Left lung (tissue), 14 donors: ENCODE measurements at regions of chr2 and their contacts with region 1.

Region 1: GRCh38 chr2:170973492-170974303 is 44.6 kb downstream of the GORASP2 start:
- DNase-seq: peak; percentile 82 to 96 (median 90)
- ATAC-seq: peak; percentile 99
- H3K4me3 ChIP-seq: peak overlapping the region; percentile 55 to 78
- H3K27ac ChIP-seq: peak overlapping the region; percentile 65 to 72
- H3K4me1 ChIP-seq: peaks cover 0 to 17% of the 10 kb centered on the region in 2 donors
- H3K27me3 ChIP-seq: peaks cover 0 to 23% of the 10 kb centered on the region in 2 donors
- CTCF ChIP-seq: peak; percentile 92 to 98

Region 2: GRCh38 chr2:171159372-171160118 is 185.8 kb after region 1 on chr2:
- intact Hi-C with region 1: loop called in 1 of 2 experiments (anchors 10 kb)
- DNase-seq: peak; percentile 50 to 81 (median 62)
- ATAC-seq: peak; percentile 55
- H3K4me3 ChIP-seq: peak overlapping the region; percentile 68 to 75
- H3K27ac ChIP-seq: peak overlapping the region; percentile 92 to 96
- H3K4me1 ChIP-seq: peaks cover 11 to 25% of the 10 kb centered on the region in 2 donors
- H3K27me3 ChIP-seq: no peaks in the 10 kb centered on the region
- CTCF ChIP-seq: peak in 1 of 2 donors; percentile 39

Region 3: DNA sequence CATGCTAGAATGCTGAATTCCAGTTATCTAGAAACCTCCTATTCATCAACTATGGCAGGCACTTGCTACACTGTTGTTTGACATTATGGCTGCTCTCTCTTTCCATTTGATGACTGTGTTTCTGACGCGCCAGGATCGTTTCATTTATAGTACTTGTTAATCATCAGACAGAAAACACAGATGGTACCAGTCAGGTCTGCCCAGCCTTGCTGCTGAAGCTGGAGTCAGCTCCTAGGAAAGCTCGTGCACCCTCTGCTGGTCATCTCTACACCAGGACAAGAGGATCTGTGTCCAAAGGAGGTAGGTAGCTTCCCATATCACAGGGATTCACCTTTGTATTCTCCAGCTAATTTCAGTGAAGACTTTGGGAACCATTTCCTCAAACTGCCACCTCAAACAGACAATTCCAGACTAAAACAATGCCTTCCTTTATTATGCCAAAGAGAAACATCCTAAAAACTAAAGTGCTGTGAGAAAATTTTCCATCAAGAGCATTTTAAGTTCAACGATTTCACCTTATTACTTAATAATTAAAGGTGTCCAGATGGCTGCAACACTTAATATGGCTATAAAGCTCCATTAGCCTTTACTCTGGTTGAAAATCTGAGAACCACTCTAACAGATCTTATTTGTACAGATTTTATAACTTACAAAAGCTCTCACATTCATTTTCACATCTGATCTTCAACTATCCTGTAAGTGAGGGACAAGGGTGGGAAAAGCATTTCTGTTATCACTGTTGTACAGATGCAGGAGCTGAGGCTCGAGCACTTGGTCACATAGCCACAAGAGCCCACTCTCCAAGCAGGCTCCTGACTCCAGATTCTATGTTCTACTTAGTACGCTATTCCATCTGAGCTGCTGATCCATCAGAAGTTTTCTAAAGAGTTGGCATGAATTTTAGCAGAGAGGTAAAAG is 442.6 kb after region 1 on chr2:
- intact Hi-C with region 1: loop called in 1 of 2 experiments (anchors 5 kb)
- DNase-seq: peak; percentile 62 to 90 (median 80)
- ATAC-seq: peak; percentile 100
- H3K4me3 ChIP-seq: no peak overlapping the region
- H3K27ac ChIP-seq: no peak overlapping the region
- H3K4me1 ChIP-seq: no peaks in the 10 kb centered on the region
- H3K27me3 ChIP-seq: no peaks in the 10 kb centered on the region
- CTCF ChIP-seq: peak; percentile 75 to 76